Psoas muscle (tissue), 8 donors: ENCODE measurements at regions of chr10 and their contacts with region 1.

Region 1: DNA sequence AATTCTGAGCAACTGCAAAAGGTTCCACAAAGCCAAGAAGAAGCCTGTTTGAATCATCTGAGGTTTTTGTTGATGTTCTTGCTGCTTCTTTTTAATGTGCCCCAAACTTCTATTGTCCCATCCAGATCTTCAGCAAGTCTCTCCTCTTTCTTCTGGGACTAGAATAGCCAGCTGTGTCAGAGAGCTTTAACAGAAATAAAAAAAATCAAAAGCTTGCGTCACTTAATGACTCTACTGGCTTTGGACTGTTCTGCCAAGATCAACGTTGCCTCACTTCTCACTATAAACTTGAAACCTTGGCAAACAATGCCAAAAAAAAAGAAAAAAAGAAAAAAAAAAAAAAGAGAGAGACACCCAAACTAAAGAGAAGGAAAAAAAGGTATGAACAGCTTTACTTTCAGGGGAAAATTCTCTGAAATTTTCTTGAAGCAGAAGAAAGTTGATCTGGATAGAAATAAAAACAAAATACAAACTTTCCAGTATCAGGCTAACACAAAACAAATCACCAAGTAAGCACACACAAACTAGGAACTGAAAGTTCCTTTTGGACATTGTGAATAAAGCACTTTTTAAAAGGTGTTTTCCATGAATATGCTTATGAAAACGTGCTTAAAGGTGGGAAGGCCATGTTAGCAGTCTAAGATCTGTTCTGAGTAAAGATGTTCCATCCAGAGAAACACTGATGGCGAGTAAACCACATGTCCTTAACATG is 14.8 kb downstream of the USP54 start:
- DNase-seq: no peak
- ATAC-seq: peak; percentile 65 to 80 (median 78)
- H3K4me3 ChIP-seq: peak overlapping the region; percentile 70
- H3K27ac ChIP-seq: peak overlapping the region; percentile 90
- H3K4me1 ChIP-seq: peaks cover 42% of the 10 kb centered on the region
- H3K27me3 ChIP-seq: no peaks in the 10 kb centered on the region
- CTCF ChIP-seq: no peak

Region 2: GRCh38 chr10:73537288-73537687 is 39.0 kb before region 1 on chr10:
- intact Hi-C with region 1: loop called in 1 of 2 experiments (anchors 5 kb)
- DNase-seq: no peak
- ATAC-seq: no peak
- H3K4me3 ChIP-seq: no peak overlapping the region
- H3K27ac ChIP-seq: peak overlapping the region; percentile 7
- H3K4me1 ChIP-seq: peaks cover 20% of the 10 kb centered on the region
- H3K27me3 ChIP-seq: no peaks in the 10 kb centered on the region
- CTCF ChIP-seq: no peak

Region 3: DNA sequence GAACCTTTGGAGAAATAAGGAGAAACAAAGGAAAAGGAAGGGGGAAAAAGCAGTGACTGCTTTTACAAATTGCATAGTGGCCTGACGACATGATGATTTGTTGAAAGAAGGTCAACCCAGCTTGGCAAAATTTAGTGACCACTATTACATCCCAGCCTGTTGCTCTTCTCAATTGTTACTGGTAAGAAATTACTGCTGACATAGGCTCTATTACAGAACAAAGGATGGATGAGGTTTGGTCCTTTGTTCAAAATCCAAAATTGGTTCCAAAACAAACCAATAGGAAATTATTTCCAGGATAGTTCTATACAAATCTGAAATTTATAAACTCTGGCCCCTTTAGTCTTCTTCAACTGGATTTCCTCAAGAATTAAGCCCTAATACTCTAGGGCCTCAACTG is 24.8 kb before region 1 on chr10:
- intact Hi-C with region 1: no loop called
- DNase-seq: no peak
- ATAC-seq: no peak
- H3K4me3 ChIP-seq: peak overlapping the region; percentile 10
- H3K27ac ChIP-seq: peak overlapping the region; percentile 88
- H3K4me1 ChIP-seq: peaks cover 67% of the 10 kb centered on the region
- H3K27me3 ChIP-seq: no peaks in the 10 kb centered on the region
- CTCF ChIP-seq: no peak

Region 4: GRCh38 chr10:73625884-73626752 is 49.8 kb after region 1 on chr10:
- intact Hi-C with region 1: loop called in 1 of 2 experiments (anchors 5 kb)
- DNase-seq: peak; percentile 90 to 96
- ATAC-seq: peak; percentile 96
- H3K4me3 ChIP-seq: peak overlapping the region; percentile 93
- H3K27ac ChIP-seq: peak overlapping the region; percentile 95
- H3K4me1 ChIP-seq: peaks cover 4% of the 10 kb centered on the region
- H3K27me3 ChIP-seq: no peaks in the 10 kb centered on the region
- CTCF ChIP-seq: no peak

Region 5: GRCh38 chr10:73634421-73634820 is 58.1 kb after region 1 on chr10:
- intact Hi-C with region 1: loop called (anchors 2 to 5 kb)
- DNase-seq: no peak
- ATAC-seq: peak in 2 of 4 donors; percentile 11 to 25
- H3K4me3 ChIP-seq: peak overlapping the region; percentile 53
- H3K27ac ChIP-seq: peak overlapping the region; percentile 98
- H3K4me1 ChIP-seq: peaks cover 37% of the 10 kb centered on the region
- H3K27me3 ChIP-seq: no peaks in the 10 kb centered on the region
- CTCF ChIP-seq: no peak

Region 6: DNA sequence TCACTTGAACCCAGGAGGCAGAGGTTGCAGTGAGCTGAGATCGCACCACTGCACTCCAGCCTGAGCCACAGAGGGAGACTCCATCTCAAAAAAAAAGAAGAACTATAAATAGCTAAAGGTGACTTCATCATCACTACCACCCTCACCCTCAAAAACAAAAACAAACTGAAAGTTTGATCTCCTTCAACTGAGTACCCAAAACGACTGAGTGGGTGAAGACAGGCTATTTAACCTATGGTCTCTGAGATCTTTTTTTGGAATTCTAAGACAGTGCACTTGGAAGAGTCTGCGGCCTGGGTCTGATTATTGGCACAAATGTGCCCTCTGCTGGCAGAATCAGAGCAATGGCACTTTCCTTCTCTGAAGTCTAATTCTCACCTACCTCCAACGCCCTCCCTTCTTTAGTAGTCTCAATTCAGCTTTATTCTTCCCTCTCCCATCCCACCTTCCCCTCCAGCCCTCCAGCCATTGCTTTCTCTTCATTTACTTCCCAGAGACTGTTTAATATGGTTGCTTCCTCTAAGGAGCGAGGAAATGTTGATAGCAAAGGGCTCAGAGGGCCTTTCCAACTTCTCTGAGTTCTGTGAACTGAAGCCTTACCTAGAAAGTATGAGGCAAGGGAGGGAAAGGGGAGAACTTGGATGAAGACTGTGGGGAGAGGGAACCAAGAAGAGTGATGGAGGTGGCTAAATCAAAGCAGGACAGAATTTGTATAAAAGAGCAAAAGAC is 67.8 kb after region 1 on chr10:
- intact Hi-C with region 1: loop called in 1 of 2 experiments (anchors 5 kb)
- DNase-seq: peak in 1 of 2 donors; percentile 63
- ATAC-seq: peak; percentile 43 to 53 (median 47)
- H3K4me3 ChIP-seq: no peak overlapping the region
- H3K27ac ChIP-seq: peak overlapping the region; percentile 98
- H3K4me1 ChIP-seq: peaks cover 50% of the 10 kb centered on the region
- H3K27me3 ChIP-seq: no peaks in the 10 kb centered on the region
- CTCF ChIP-seq: peak; percentile 85

Region 7: GRCh38 chr10:74081192-74081803 is 505.0 kb after region 1 on chr10:
- intact Hi-C with region 1: no loop called
- DNase-seq: no peak
- ATAC-seq: peak; percentile 51 to 62 (median 56)
- H3K4me3 ChIP-seq: no peak overlapping the region
- H3K27ac ChIP-seq: peak overlapping the region; percentile 52
- H3K4me1 ChIP-seq: peaks cover 32% of the 10 kb centered on the region
- H3K27me3 ChIP-seq: no peaks in the 10 kb centered on the region
- CTCF ChIP-seq: peak; percentile 74